Naive thymus-derived CD8-positive, alpha-beta T cell (primary cell): ENCODE measurements at regions of chr19 and their contacts with region 1.

Region 1: GRCh38 chr19:8513687-8514504 is at the start of gene ZNF414:
- DNase-seq: peak; percentile 91 to 100 (median 97)
- ATAC-seq: peak; percentile 75 to 78
- H3K4me3 Mint-ChIP-seq: peak within 1 kb of the TSS; percentile 90 to 98 (median 96)
- H3K27ac Mint-ChIP-seq: peak within 1 kb of the TSS; percentile 94 to 99 (median 98)
- H3K4me1 Mint-ChIP-seq: peaks cover 25 to 62% (median 60%) of the 10 kb centered on the region in 4 donors
- H3K27me3 Mint-ChIP-seq: no peaks in the 10 kb centered on the region
- polyA plus RNA-seq, gene ZNF414: 15.2 to 34.2 (median 27.7) TPM

Region 2: GRCh38 chr19:8444645-8445487 is 69.0 kb before region 1 on chr19 and contains the start of gene HNRNPM:
- POLR2A ChIA-PET with region 1: interaction called, 29 read pairs
- DNase-seq: peak; percentile 97 to 100 (median 100)
- ATAC-seq: peak; percentile 88 to 91
- H3K4me3 Mint-ChIP-seq: peak within 1 kb of the TSS; percentile 89 to 99 (median 97)
- H3K27ac Mint-ChIP-seq: peak within 1 kb of the TSS; percentile 94 to 99 (median 98)
- H3K4me1 Mint-ChIP-seq: peaks cover 19 to 48% (median 41%) of the 10 kb centered on the region in 4 donors
- H3K27me3 Mint-ChIP-seq: no peaks in the 10 kb centered on the region
- polyA plus RNA-seq, gene HNRNPM: 214 to 304 (median 217) TPM

Region 3: GRCh38 chr19:8487137-8487851 is 26.6 kb before region 1 on chr19:
- POLR2A ChIA-PET with region 1: interaction called, 37 read pairs
- DNase-seq: peak in 9 of 10 donors; percentile 49 to 85 (median 70)
- ATAC-seq: peak; percentile 90 to 91
- H3K4me3 Mint-ChIP-seq: peak overlapping the region; percentile 48 to 86 (median 78)
- H3K27ac Mint-ChIP-seq: peak overlapping the region; percentile 79 to 94 (median 92)
- H3K4me1 Mint-ChIP-seq: peaks cover 34 to 56% (median 45%) of the 10 kb centered on the region in 4 donors
- H3K27me3 Mint-ChIP-seq: no peaks in the 10 kb centered on the region

Region 4: GRCh38 chr19:8526345-8527067 is 12.6 kb after region 1 on chr19:
- POLR2A ChIA-PET with region 1: interaction called, 104 read pairs
- DNase-seq: no peak
- ATAC-seq: peak in 1 of 2 donors; percentile 30
- H3K4me3 Mint-ChIP-seq: peak overlapping the region in 1 of 10 donors; percentile 57
- H3K27ac Mint-ChIP-seq: peak overlapping the region in 6 of 10 donors; percentile 28 to 88 (median 74)
- H3K4me1 Mint-ChIP-seq: peaks cover 5 to 24% (median 13%) of the 10 kb centered on the region in 4 donors
- H3K27me3 Mint-ChIP-seq: no peaks in the 10 kb centered on the region

Region 5: DNA sequence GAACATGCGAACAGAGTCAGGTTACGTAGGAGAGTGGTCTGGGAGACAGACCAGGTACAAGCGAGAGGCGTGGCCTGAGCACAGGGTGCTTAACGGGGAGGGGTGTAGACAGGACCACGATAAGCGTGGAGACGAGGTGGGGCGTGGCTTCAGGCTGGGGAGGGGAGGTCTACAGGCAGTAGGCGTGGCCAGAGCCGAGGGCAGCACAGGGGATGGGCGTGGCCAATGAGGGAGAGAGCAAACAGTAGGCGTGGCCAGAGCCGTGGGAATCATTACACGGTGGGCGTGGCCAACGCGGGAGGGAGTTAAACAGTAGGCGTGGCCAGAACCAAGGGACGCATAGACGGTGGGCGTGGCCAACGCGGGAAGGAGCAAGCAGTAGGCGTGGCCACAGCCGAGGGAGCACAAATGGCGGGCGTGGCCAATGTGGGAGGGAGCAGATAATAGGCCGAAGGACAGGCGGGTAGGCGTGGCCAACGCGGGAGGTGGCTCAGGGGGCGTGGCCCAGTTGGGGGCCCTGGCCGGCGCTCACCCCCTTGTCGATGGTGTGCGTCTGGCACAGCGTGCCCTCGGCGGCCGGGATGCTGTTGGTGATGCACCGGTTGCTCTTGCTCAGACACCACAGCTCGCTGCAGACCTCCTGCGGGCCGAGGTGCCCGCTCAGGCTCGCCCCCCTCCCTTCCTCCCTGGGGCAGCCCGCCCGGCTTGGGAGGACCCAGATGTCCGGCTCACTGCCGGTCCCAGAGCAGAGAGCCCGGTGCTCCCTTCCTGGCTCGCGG is 78.5 kb after region 1 on chr19:
- POLR2A ChIA-PET with region 1: interaction called, 12 read pairs
- DNase-seq: peak; percentile 92 to 98 (median 98)
- ATAC-seq: peak; percentile 88 to 89
- H3K4me3 Mint-ChIP-seq: peak overlapping the region; percentile 72 to 92 (median 88)
- H3K27ac Mint-ChIP-seq: peak overlapping the region; percentile 1 to 96 (median 82)
- H3K4me1 Mint-ChIP-seq: peaks cover 18 to 45% (median 32%) of the 10 kb centered on the region in 4 donors
- H3K27me3 Mint-ChIP-seq: no peaks in the 10 kb centered on the region